ENCODE measurements at regions of chr10 and their contacts with region 1.

Region 1: GRCh38 chr10:93463678-93464476 is 18.3 kb downstream of the MYOF start:
- DNase-seq: no peak
- ATAC-seq: no peak
- H3K4me3 ChIP-seq: no peak overlapping the region
- H3K4me3 Mint-ChIP-seq: no peak overlapping the region
- H3K27ac ChIP-seq: no peak overlapping the region
- H3K27ac Mint-ChIP-seq: no peak overlapping the region
- H3K4me1 ChIP-seq: peaks cover 0 to 8% of the 10 kb centered on the region in 2 experiments
- H3K4me1 Mint-ChIP-seq: peaks cover 5 to 16% (median 6%) of the 10 kb centered on the region in 3 donors
- H3K27me3 ChIP-seq: no peaks in the 10 kb centered on the region
- H3K27me3 Mint-ChIP-seq: no peaks in the 10 kb centered on the region

Region 2: GRCh38 chr10:91617073-91617580 is 1846.8 kb before region 1 on chr10:
- CTCF ChIA-PET with region 1: no interaction called
- POLR2A ChIA-PET with region 1: interaction called in 1 of 2 experiments, 11 read pairs
- DNase-seq: no peak
- ATAC-seq: no peak
- H3K4me3 ChIP-seq: no peak overlapping the region
- H3K4me3 Mint-ChIP-seq: no peak overlapping the region
- H3K27ac ChIP-seq: no peak overlapping the region
- H3K27ac Mint-ChIP-seq: no peak overlapping the region
- H3K4me1 ChIP-seq: no peaks in the 10 kb centered on the region
- H3K4me1 Mint-ChIP-seq: no peaks in the 10 kb centered on the region
- H3K27me3 ChIP-seq: peaks cover 0 to 6% of the 10 kb centered on the region in 2 experiments
- H3K27me3 Mint-ChIP-seq: peaks cover 19 to 29% of the 10 kb centered on the region in 2 donors

Region 3: DNA sequence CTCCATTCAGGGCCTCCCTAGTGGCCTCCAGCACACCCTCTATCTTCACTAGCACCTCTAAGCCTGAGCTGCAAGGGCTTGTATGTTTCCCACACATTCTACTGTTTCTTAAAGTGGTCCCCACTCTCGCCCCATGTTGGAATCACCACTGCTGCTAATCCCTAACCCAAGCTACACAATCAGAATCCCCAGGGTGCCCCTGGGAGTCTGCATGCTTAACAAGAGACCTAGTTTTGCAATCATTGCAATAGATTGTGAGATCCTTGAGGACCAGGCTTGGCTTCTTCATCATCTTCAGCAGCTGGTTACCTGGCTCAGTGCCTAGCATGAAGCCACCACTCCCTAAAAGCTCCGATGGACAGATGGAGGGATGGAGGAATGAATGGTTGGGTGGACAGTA is 95.7 kb before region 1 on chr10:
- CTCF ChIA-PET with region 1: interaction called in 1 of 2 experiments, 11 read pairs
- POLR2A ChIA-PET with region 1: no interaction called
- DNase-seq: no peak
- ATAC-seq: no peak
- H3K4me3 ChIP-seq: no peak overlapping the region
- H3K4me3 Mint-ChIP-seq: no peak overlapping the region
- H3K27ac ChIP-seq: no peak overlapping the region
- H3K27ac Mint-ChIP-seq: no peak overlapping the region
- H3K4me1 ChIP-seq: no peaks in the 10 kb centered on the region
- H3K4me1 Mint-ChIP-seq: peaks cover 0 to 3% (median 3%) of the 10 kb centered on the region in 3 donors
- H3K27me3 ChIP-seq: peaks cover 0 to 4% of the 10 kb centered on the region in 2 experiments
- H3K27me3 Mint-ChIP-seq: peaks cover 0 to 1% of the 10 kb centered on the region in 2 donors

Region 4: GRCh38 chr10:93452143-93452542 is 11.7 kb before region 1 on chr10:
- CTCF ChIA-PET with region 1: no interaction called
- POLR2A ChIA-PET with region 1: no interaction called
- DNase-seq: no peak
- ATAC-seq: no peak
- H3K4me3 ChIP-seq: no peak overlapping the region
- H3K4me3 Mint-ChIP-seq: no peak overlapping the region
- H3K27ac ChIP-seq: no peak overlapping the region
- H3K27ac Mint-ChIP-seq: no peak overlapping the region
- H3K4me1 ChIP-seq: peaks cover 0 to 2% of the 10 kb centered on the region in 2 experiments
- H3K4me1 Mint-ChIP-seq: peaks cover 10 to 13% (median 10%) of the 10 kb centered on the region in 3 donors
- H3K27me3 ChIP-seq: peaks cover 0 to 3% of the 10 kb centered on the region in 2 experiments
- H3K27me3 Mint-ChIP-seq: no peaks in the 10 kb centered on the region

Measured in T-cell (primary cell).